Thyroid gland (tissue), 4 donors: ENCODE measurements at regions of chr18 and their contacts with region 1.

Region 1: DNA sequence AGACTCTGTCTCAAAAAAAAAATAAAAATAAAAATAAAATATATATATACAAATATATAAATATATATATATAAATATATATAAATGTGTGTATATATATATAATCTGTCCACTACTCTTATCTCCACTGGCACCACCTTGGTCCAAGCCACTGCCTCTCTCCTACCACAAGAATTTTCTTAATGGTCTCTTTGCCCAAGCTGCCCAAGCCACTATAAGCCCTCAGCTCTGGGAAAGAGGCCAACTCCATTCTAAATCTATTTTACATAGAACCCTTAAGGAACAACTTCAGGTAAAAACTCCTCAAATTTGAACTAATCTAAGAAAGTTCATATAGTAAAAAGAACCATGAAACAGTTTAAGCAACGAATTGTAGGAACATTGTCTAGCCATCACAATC is 45.6 kb upstream of the GREB1L start:
- DNase-seq: no peak
- H3K4me3 ChIP-seq: no peak overlapping the region
- H3K27ac ChIP-seq: no peak overlapping the region
- H3K4me1 ChIP-seq: no peaks in the 10 kb centered on the region
- H3K27me3 ChIP-seq: no peaks in the 10 kb centered on the region
- CTCF ChIP-seq: no peak
- POLR2A ChIP-seq: no peak

Region 2: GRCh38 chr18:21117409-21118131 is 78.9 kb before region 1 on chr18:
- intact Hi-C with region 1: no loop called
- DNase-seq: no peak
- H3K4me3 ChIP-seq: no peak overlapping the region
- H3K27ac ChIP-seq: peak overlapping the region in 1 of 3 donors; percentile 14
- H3K4me1 ChIP-seq: no peaks in the 10 kb centered on the region
- H3K27me3 ChIP-seq: no peaks in the 10 kb centered on the region
- CTCF ChIP-seq: no peak
- POLR2A ChIP-seq: no peak

Region 3: GRCh38 chr18:21443776-21444464 is 247.5 kb after region 1 on chr18:
- intact Hi-C with region 1: loop called (anchors 2 kb)
- DNase-seq: no peak
- H3K4me3 ChIP-seq: no peak overlapping the region
- H3K27ac ChIP-seq: no peak overlapping the region
- H3K4me1 ChIP-seq: no peaks in the 10 kb centered on the region
- H3K27me3 ChIP-seq: no peaks in the 10 kb centered on the region
- CTCF ChIP-seq: no peak
- POLR2A ChIP-seq: no peak